ENCODE measurements at regions of chr19 and their contacts with region 1.

Region 1: DNA sequence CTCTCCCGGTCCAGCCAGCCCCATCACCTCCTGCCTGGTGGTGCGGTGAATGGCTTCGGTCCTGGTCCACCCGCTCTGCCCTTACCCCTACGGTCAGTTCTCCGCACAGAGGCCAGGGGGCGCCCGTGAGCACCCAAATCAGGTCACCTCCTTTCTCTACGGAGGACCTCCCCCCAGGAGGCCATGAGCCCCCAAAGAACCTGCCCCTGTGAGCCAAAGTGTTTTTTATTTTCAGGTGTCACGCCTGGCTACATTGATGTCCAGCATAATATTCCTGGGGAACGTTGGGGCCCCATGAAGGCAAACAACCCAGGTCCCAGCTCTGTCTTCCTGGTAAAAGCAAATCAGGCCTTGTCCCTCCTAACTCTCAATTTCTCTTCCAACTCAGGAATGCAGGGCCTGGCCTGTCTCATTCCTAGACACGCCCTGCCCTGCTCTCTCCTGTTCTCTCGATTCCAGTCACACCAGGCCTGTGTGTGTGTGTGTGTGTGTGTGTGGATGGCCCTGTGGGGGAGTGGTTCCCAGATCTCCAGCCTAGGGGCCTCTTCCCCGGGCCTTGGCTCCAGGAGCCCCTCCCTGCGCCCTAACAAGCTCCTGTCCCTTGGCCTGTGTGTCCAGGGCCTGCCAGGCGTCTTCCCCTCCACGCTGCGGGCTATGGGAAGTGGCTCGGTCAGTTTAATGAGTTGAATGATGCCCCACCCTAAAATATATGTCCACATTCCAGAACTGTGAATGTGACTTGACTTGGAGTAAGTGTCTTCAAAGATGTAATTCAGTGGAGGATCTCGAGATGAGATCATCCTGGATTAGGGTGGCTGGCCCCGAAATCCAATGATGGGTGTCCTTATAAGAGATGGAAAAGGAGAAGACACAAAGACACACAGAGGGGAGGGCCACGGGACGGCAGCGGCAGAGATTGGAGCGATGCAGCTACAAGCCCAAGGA is 9.8 kb upstream of the GIPC1 start:
- DNase-seq: peak; percentile 81
- H3K4me3 Mint-ChIP-seq: peak overlapping the region; percentile 26
- H3K27ac Mint-ChIP-seq: peak overlapping the region; percentile 95
- H3K4me1 Mint-ChIP-seq: peaks cover 62% of the 10 kb centered on the region
- H3K27me3 Mint-ChIP-seq: peaks cover 22% of the 10 kb centered on the region

Region 2: GRCh38 chr19:14450168-14450874 is 55.4 kb before region 1 on chr19:
- CTCF ChIA-PET with region 1: no interaction called
- DNase-seq: peak; percentile 82
- H3K4me3 Mint-ChIP-seq: no peak overlapping the region
- H3K27ac Mint-ChIP-seq: peak overlapping the region; percentile 42
- H3K4me1 Mint-ChIP-seq: peaks cover 13% of the 10 kb centered on the region
- H3K27me3 Mint-ChIP-seq: no peaks in the 10 kb centered on the region

Region 3: DNA sequence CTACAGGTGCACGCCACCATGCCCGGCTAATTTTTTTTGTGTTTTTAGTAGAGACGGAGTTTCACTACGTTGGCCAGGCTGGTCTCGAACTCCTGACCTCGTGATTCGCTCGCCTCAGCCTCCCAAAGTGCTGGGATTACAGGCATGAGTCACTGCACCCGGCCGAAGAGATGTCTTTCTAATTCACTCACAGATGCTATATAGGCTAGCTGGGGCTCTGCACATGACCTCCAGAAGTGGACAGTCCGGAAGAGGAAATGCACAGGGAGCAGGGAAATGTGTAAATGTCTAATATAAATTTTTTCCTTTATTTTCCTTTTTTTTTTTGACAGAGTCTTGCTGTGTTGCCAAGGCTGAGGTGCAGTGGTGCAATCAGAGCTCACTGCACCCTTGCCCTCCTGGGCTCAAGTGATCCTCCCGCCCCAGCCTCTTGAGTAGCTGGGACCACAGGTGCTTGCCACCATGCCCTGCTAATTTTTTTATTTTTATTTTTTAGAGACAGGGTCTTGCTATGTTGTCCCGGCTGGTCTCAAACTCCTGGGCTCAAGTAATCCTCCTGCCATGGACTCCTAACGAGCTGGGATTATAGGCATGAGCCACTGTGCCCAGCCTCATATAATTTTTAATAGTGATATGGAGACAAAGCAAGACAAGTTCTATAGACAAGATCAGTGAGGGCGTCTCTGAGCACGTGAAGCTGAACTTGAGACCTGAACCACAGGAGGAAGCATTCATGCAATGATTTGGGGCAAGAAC is 18.2 kb before region 1 on chr19:
- CTCF ChIA-PET with region 1: interaction called, 12 read pairs
- DNase-seq: no peak
- H3K4me3 Mint-ChIP-seq: no peak overlapping the region
- H3K27ac Mint-ChIP-seq: no peak overlapping the region
- H3K4me1 Mint-ChIP-seq: peaks cover 11% of the 10 kb centered on the region
- H3K27me3 Mint-ChIP-seq: no peaks in the 10 kb centered on the region

Region 4: DNA sequence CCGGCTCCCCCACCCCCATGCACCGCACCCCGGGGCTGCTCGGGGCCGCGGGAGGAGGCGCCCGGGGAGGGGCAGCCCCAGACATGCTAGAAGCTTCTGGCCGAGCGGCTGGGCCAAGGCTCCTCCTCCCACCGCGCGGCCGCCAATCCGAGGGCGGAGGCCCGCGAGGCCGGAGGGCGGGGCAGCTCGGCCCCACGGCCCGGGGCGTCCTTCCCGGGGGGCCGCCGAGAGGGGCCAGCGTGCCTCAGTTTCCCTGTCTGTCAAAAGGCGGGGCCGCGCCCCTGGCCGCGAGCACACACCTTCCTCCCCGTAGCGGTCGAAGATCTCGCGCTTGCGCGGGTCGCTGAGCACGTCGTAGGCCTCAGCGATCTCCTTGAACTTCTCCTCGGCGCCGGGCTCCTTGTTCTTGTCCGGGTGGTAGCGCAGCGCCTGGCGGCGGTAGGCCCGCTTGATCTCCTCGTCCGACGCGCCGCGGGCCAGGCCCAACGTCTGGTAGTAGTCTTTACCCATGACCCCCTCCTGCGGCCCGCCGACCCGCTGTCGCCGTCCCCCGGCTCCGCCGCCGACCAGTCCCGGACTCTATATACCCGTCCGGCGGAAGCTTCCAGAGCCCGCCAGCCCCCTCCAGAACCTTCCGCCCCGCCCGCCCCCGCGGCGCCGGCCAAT is 12.2 kb after region 1 on chr19 and contains the start of gene DNAJB1:
- CTCF ChIA-PET with region 1: interaction called, 39 read pairs
- DNase-seq: peak; percentile 75
- H3K4me3 Mint-ChIP-seq: peak within 1 kb of the TSS; percentile 93
- H3K27ac Mint-ChIP-seq: peak within 1 kb of the TSS; percentile 97
- H3K4me1 Mint-ChIP-seq: peaks cover 69% of the 10 kb centered on the region
- H3K27me3 Mint-ChIP-seq: no peaks in the 10 kb centered on the region

Measured in activated naive CD4-positive, alpha-beta T cell treated with anti-CD3 and anti-CD28 coated beads, Interleukin-2, amount 10 ng/mL, durations not matched to agents 7 days and 5 days (primary cell).